Dendritic cell treated with granulocyte-macrophage colony-stimulating factor and Interleukin-4, amounts not matched to agents 40 ng/mL and 50 ng/mL, for 4 days (primary cell): ENCODE measurements at regions of chr12 and their contacts with region 1.

Region 1: DNA sequence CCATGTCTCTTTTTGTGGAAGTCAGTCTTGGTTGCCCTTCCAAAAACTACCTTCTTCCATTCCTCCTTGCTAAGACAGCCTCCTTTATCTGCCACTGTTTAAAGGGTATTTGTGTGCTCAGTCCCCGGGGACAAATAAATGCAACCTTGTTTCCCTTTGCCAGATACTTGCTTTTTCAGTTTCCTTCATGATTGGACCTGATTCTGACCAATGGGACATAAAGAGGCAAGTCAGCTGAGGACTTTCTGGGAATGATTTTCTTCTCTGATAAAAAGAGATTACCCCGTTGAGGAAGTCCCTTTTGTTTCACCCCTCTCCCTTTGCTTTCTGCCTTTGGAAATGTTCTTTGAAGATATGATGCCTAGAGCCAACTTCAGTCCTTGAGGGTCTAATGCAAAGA is 7.4 kb upstream of the TUBA1B start:
- H3K4me3 Mint-ChIP-seq: no peak overlapping the region
- H3K27ac Mint-ChIP-seq: no peak overlapping the region
- H3K4me1 Mint-ChIP-seq: peaks cover 13% of the 10 kb centered on the region
- H3K27me3 Mint-ChIP-seq: no peaks in the 10 kb centered on the region

Region 2: GRCh38 chr12:49170924-49171323 is 32.3 kb after region 1 on chr12:
- intact Hi-C with region 1: loop called (anchors 5 kb)
- H3K4me3 Mint-ChIP-seq: no peak overlapping the region
- H3K27ac Mint-ChIP-seq: no peak overlapping the region
- H3K4me1 Mint-ChIP-seq: no peaks in the 10 kb centered on the region
- H3K27me3 Mint-ChIP-seq: no peaks in the 10 kb centered on the region

Region 3: DNA sequence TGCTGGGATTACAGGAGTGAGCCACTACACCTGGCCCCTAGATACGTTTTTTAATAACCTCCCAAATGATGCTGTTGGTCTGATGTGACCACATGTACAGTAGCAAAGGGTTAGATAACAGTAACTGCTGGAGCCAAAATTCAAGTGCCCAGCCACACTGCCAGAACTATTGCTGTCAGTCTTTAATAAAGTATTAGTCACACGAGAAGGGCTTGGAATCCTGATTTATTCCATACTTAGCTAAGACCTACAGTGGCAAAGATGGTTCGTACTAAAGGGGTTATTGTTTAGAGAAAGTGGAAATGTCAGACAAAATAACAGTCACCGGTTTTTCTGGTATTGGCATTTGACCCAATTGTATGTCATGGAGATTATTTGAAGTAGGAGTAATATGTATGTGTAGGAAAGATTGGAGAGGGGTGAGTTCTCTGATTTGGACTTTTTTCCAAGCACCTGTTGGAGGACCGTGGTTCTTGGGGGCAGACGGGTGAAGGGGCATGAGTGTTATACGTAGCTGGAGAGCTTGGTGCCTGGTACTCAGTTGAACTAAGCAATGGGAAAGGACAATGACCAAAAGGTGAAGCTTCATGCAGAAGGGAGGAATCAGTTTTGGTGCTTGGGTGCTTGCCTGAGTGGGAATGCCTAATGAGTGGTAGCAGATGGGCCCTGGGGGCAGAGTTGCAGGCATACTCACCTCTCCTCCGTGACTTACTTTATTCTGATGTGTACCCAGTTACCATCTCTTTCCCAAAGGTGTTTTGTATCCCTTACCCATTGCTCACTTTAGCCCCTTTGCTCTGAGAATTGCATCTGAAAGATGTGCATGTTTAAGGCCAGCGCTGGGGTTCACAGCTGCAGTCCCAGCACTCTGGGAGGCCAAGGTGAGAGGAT is 136.1 kb after region 1 on chr12:
- intact Hi-C with region 1: no loop called
- H3K4me3 Mint-ChIP-seq: no peak overlapping the region
- H3K27ac Mint-ChIP-seq: no peak overlapping the region
- H3K4me1 Mint-ChIP-seq: peaks cover 7% of the 10 kb centered on the region
- H3K27me3 Mint-ChIP-seq: peaks cover 2% of the 10 kb centered on the region

Region 4: GRCh38 chr12:49403971-49404450 is 265.4 kb after region 1 on chr12:
- intact Hi-C with region 1: no loop called
- H3K4me3 Mint-ChIP-seq: no peak overlapping the region
- H3K27ac Mint-ChIP-seq: no peak overlapping the region
- H3K4me1 Mint-ChIP-seq: peaks cover 10% of the 10 kb centered on the region
- H3K27me3 Mint-ChIP-seq: no peaks in the 10 kb centered on the region